Activated T-helper 1 cell treated with anti-CD3 and anti-CD28 coated beads, Interleukin-12 subunit alpha, Interleukin-12 subunit beta, Interleukin-2, Interleukin-4 antibody, amounts not matched to agents 30 ng/mL and 10 ng/mL and 1 ng/mL, durations not matched to agents 14 hours and 24 hours and 36 hours (primary cell): ENCODE measurements at regions of chr12 and their contacts with region 1.

Region 1: DNA sequence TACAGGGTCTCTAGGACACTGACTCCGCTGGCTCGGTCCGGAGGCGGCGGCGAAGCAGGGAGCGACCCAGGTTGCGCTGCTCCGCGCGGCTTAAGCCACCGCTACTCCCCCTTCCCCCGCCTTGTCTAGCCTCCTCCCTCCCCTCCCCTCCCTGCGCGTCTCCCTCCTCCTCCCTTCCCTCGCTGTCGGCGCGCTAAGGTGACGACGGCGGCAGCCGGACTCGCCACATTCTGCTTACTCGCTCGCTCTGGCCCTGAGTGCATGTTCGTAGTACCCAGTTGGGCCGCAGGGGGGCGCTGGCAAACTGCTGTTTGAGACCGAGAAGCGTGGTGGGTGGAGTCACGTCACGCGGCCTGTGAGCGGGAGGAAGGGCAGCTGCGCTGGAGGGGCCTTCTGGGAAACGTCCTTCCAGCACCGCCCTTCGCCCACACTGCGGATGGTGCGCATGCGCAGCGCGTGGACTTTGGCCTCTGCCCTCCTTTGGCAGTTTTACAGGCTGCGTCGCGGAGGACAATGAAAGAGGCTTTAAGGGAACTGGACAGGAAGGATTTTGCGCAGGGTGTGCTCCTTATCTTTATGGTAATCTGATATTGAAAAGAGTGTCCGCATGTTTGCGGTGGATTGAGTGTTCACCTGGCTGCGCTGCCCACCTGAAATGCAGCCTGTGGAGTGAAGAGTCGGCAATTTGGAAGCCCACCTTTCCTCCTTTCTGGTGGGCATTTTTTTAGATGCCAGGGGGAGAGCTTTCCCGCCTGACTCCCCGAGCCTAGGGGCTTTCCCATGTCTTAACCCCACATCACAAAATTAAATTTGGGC is at the start of gene SCAF11:
- DNase-seq: peak; percentile 100
- H3K4me3 Mint-ChIP-seq: peak within 1 kb of the TSS; percentile 95
- H3K27ac Mint-ChIP-seq: peak within 1 kb of the TSS; percentile 98
- H3K4me1 Mint-ChIP-seq: peaks cover 47% of the 10 kb centered on the region
- H3K27me3 Mint-ChIP-seq: peaks cover 3% of the 10 kb centered on the region
- total RNA-seq, gene SCAF11: 125 and 131 TPM in 2 replicates

Region 2: GRCh38 chr12:45670346-45671065 is 320.2 kb before region 1 on chr12:
- intact Hi-C with region 1: loop called (anchors 5 kb)
- DNase-seq: peak; percentile 9
- H3K4me3 Mint-ChIP-seq: no peak overlapping the region
- H3K27ac Mint-ChIP-seq: no peak overlapping the region
- H3K4me1 Mint-ChIP-seq: peaks cover 31% of the 10 kb centered on the region
- H3K27me3 Mint-ChIP-seq: no peaks in the 10 kb centered on the region

Region 3: DNA sequence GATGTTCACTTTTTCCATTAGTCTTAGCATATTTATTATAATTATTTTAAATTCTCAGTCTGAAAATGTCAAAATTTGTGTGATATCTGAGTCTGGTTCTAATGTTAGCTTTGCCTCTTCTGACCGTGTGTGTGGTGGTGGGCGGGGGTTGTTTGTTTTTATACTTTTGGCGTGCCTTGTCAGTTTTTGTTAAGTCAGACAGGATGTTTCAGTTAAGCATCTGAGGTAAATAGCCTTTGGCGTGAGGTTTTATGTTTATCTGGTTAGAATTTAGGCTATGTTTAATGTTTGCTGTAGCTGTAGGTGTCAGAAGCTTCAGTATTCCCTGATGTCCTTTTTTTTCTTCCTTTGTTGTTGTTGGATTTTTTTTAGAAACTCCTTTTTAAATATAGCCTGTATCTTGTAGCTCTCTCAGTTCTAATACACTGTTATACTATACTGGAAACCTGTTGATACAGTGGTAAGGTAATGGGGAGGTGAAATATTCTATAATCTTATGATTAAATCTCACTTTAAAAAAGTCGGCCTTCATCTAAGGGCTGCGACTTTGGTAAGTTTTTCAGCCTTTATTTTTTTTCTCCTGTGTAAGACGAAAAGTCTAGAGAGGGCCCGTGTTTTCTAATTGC is 111.9 kb before region 1 on chr12:
- intact Hi-C with region 1: no loop called
- DNase-seq: peak; percentile 16
- H3K4me3 Mint-ChIP-seq: peak overlapping the region; percentile 46
- H3K27ac Mint-ChIP-seq: peak overlapping the region; percentile 82
- H3K4me1 Mint-ChIP-seq: peaks cover 66% of the 10 kb centered on the region
- H3K27me3 Mint-ChIP-seq: no peaks in the 10 kb centered on the region

Region 4: DNA sequence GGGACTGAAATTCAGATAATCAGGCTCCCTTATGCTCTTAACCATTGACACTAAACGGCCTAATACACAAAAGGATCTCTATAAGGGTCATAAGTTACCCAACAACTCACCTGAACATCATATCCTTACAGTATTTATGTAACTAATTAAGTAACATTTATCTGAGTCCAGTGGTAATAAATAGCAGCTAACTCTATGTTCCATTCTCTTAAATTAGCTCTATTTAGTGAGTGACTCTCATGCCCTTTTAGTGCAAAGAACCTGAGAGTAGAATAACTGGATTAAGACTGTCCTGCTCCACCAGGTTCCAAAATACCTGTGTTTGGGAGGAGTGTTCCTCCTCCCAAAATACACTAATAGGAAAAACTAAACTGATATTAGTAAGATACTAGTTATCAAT is 10.1 kb before region 1 on chr12:
- intact Hi-C with region 1: no loop called
- DNase-seq: no peak
- H3K4me3 Mint-ChIP-seq: no peak overlapping the region
- H3K27ac Mint-ChIP-seq: no peak overlapping the region
- H3K4me1 Mint-ChIP-seq: peaks cover 82% of the 10 kb centered on the region
- H3K27me3 Mint-ChIP-seq: no peaks in the 10 kb centered on the region

Region 5: GRCh38 chr12:46071769-46072624 is 81.3 kb after region 1 on chr12:
- intact Hi-C with region 1: loop called (anchors 1 kb)
- DNase-seq: peak; percentile 42
- H3K4me3 Mint-ChIP-seq: no peak overlapping the region
- H3K27ac Mint-ChIP-seq: no peak overlapping the region
- H3K4me1 Mint-ChIP-seq: peaks cover 11% of the 10 kb centered on the region
- H3K27me3 Mint-ChIP-seq: no peaks in the 10 kb centered on the region

Region 6: DNA sequence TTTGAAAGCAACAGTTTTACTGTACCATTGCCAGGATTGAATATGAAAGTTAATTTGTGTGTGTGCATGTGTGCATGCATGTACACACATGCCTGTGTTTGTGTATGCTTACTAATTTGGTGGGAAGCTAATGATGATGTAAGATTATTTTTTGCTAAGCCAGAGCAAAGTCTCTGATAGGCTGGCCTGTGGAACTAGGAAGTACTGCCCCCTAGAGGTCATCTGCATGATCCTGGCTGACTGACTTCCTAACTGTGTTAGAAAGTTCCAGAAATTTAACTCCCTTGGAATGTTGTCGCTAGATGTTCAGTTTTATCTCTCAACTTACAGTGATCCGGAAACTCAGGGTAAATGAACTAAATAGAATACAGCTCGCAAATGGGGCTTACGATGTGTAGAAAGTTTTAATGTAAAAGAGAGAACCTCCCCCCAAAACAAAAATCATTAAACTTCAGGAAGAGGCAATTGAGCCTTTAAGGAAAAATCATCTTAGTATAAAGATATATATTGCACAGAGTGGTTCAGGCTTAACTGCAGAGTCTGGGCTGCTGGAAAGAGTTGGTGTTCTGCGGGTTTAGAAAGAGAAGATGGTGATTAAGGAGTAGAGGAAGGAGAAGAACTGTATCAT is 312.5 kb after region 1 on chr12:
- intact Hi-C with region 1: loop called (anchors 10 kb)
- DNase-seq: no peak
- H3K4me3 Mint-ChIP-seq: no peak overlapping the region
- H3K27ac Mint-ChIP-seq: no peak overlapping the region
- H3K4me1 Mint-ChIP-seq: no peaks in the 10 kb centered on the region
- H3K27me3 Mint-ChIP-seq: peaks cover 14% of the 10 kb centered on the region

Region 7: GRCh38 chr12:46675736-46676135 is 685.1 kb after region 1 on chr12:
- intact Hi-C with region 1: loop called (anchors 5 kb)
- DNase-seq: no peak
- H3K4me3 Mint-ChIP-seq: no peak overlapping the region
- H3K27ac Mint-ChIP-seq: no peak overlapping the region
- H3K4me1 Mint-ChIP-seq: peaks cover 7% of the 10 kb centered on the region
- H3K27me3 Mint-ChIP-seq: peaks cover 3% of the 10 kb centered on the region

Region 8: DNA sequence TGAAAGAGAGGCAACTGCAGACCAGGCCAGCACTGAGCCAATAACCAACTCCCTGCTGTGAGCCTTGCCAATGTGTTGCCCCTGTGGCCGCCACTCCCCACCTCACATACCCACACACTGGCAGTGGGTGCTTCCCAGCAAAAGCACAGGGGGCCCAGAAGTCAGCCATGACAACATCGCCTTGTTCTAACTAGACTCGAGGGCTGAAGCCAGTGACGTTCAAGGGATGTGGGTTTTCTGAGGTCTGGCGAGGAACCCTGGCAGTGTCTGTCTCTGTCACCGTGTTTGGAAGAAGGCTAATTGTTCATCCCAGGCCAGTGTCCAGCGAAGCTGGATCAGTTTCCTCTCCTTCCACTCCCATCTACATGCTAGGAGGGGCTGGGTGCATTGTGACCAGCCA is 1400.9 kb after region 1 on chr12:
- intact Hi-C with region 1: loop called (anchors 2 kb)
- DNase-seq: peak; percentile 44
- H3K4me3 Mint-ChIP-seq: peak overlapping the region; percentile 27
- H3K27ac Mint-ChIP-seq: peak overlapping the region; percentile 100
- H3K4me1 Mint-ChIP-seq: peaks cover 89% of the 10 kb centered on the region
- H3K27me3 Mint-ChIP-seq: no peaks in the 10 kb centered on the region